ENCODE measurements at regions of chr5 and their contacts with region 1.

Region 1: GRCh38 chr5:135332519-135333150 is 66.4 kb downstream of the MACROH2A1 start:
- DNase-seq: no peak
- H3K4me3 ChIP-seq: no peak overlapping the region
- H3K27ac ChIP-seq: no peak overlapping the region
- H3K4me1 ChIP-seq: no peaks in the 10 kb centered on the region
- H3K27me3 ChIP-seq: no peaks in the 10 kb centered on the region
- CTCF ChIP-seq: peak in 3 of 4 experiments; percentile 34 to 65 (median 65)
- POLR2A ChIP-seq: no peak

Region 2: GRCh38 chr5:134738133-134738962 is 594.3 kb before region 1 on chr5 and contains the start of gene CAMLG:
- intact Hi-C with region 1: no loop called
- DNase-seq: peak; percentile 98
- H3K4me3 ChIP-seq: peak within 1 kb of the TSS; percentile 83 to 88
- H3K27ac ChIP-seq: peak within 1 kb of the TSS; percentile 91 to 95
- H3K4me1 ChIP-seq: peaks cover 8% of the 10 kb centered on the region
- H3K27me3 ChIP-seq: no peaks in the 10 kb centered on the region
- CTCF ChIP-seq: peak in 3 of 4 experiments; percentile 43 to 67 (median 60)
- POLR2A ChIP-seq: peak; percentile 96
- total RNA-seq, gene CAMLG: 26.4 to 31.3 TPM

Region 3: GRCh38 chr5:134917070-134917815 is 415.4 kb before region 1 on chr5:
- intact Hi-C with region 1: loop called (anchors 5 kb)
- DNase-seq: no peak
- H3K4me3 ChIP-seq: no peak overlapping the region
- H3K27ac ChIP-seq: no peak overlapping the region
- H3K4me1 ChIP-seq: no peaks in the 10 kb centered on the region
- H3K27me3 ChIP-seq: no peaks in the 10 kb centered on the region
- CTCF ChIP-seq: peak in 2 of 4 experiments; percentile 34 to 39
- POLR2A ChIP-seq: no peak

Region 4: DNA sequence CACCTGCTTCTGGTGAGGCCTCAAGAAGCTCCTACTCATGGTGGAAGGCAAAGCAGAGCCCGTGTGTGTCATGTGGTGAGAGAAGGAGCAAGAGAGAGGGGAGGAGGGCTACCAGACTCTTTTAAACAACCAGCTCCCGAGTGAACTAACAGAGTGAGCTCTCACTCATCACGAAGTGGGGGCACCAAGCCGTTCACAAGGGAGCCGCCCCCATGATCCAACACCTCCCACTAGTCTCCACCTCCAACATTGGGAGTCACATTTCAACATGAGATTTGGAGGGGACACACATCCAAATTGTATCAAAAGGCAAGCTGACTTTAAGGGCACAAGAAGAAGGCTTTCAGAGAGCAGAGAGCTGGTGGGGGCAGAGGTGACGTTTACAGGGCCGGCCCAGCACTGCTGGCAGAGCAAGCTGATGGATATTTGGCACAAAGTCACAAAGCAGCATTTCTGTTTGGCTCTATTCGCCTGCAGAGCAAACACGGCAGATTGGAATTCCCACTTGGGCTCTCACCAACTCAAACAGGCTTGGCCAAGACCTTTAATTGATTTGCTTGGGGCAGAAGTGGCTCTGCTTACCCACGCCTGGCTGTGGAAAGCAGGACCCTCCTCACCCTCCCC is 318.6 kb before region 1 on chr5:
- intact Hi-C with region 1: loop called (anchors 5 kb)
- DNase-seq: peak; percentile 76
- H3K4me3 ChIP-seq: no peak overlapping the region
- H3K27ac ChIP-seq: peak overlapping the region; percentile 19 to 37
- H3K4me1 ChIP-seq: peaks cover 6% of the 10 kb centered on the region
- H3K27me3 ChIP-seq: no peaks in the 10 kb centered on the region
- CTCF ChIP-seq: no peak
- POLR2A ChIP-seq: no peak

Region 5: GRCh38 chr5:135039271-135040045 is 293.2 kb before region 1 on chr5:
- intact Hi-C with region 1: loop called (anchors 5 kb)
- DNase-seq: no peak
- H3K4me3 ChIP-seq: peak overlapping the region; percentile 9 to 18
- H3K27ac ChIP-seq: peak overlapping the region in 1 of 2 donors; percentile 32
- H3K4me1 ChIP-seq: no peaks in the 10 kb centered on the region
- H3K27me3 ChIP-seq: peaks cover 15% of the 10 kb centered on the region
- CTCF ChIP-seq: no peak
- POLR2A ChIP-seq: no peak

Region 6: GRCh38 chr5:135162661-135163265 is 169.9 kb before region 1 on chr5:
- intact Hi-C with region 1: no loop called
- DNase-seq: no peak
- H3K4me3 ChIP-seq: no peak overlapping the region
- H3K27ac ChIP-seq: no peak overlapping the region
- H3K4me1 ChIP-seq: no peaks in the 10 kb centered on the region
- H3K27me3 ChIP-seq: peaks cover 4% of the 10 kb centered on the region
- CTCF ChIP-seq: no peak
- POLR2A ChIP-seq: no peak

Region 7: GRCh38 chr5:135191084-135191826 is 141.4 kb before region 1 on chr5:
- intact Hi-C with region 1: loop called (anchors 2 kb)
- DNase-seq: peak; percentile 73
- H3K4me3 ChIP-seq: peak overlapping the region; percentile 26 to 28
- H3K27ac ChIP-seq: peak overlapping the region; percentile 28 to 69
- H3K4me1 ChIP-seq: no peaks in the 10 kb centered on the region
- H3K27me3 ChIP-seq: no peaks in the 10 kb centered on the region
- CTCF ChIP-seq: peak; percentile 74 to 96 (median 88)
- POLR2A ChIP-seq: no peak

Region 8: GRCh38 chr5:135208903-135209721 is 123.5 kb before region 1 on chr5:
- intact Hi-C with region 1: loop called (anchors 5 kb)
- DNase-seq: no peak
- H3K4me3 ChIP-seq: no peak overlapping the region
- H3K27ac ChIP-seq: no peak overlapping the region
- H3K4me1 ChIP-seq: no peaks in the 10 kb centered on the region
- H3K27me3 ChIP-seq: no peaks in the 10 kb centered on the region
- CTCF ChIP-seq: no peak
- POLR2A ChIP-seq: no peak